Caco-2 (cell line): ENCODE measurements at regions of chr1 and their contacts with region 1.

Region 1: DNA sequence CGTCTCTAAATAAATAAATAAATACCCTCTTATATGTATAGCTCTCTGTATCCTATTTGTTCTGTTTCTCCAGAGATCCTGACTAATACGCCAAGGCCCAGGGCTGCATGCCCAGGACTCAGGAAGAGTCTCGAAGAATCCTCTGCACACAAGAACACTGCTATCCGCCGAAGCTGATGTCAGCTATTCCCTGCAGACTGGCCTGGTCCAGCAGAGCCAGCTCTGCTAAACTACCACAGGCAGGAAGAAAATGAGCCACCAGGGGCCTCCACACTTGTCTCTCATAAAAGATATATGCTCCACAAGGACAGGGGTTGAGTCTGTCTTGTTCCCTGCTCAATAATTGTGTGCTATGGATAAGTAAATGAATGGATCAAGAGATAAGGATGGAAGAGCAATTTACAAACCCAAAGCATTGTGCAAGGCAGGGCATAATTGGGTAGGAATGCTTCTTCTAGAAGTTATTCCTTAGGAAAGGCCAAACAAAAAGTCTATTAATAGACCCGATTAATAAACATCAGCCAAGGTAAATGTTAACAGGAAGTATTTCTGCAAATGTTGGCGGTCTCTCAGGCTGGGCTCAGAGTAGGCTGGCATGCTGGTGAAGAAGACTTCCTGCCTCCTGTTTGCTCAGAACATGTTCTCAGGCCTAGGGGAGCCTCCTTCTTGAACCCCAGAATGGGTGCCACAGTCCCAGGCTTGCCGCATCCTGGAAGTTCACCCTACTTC is 26.3 kb upstream of the MAN1C1 start:
- DNase-seq: peak in 1 of 2 experiments; percentile 23
- H3K4me3 ChIP-seq: no peak overlapping the region
- H3K4me3 Mint-ChIP-seq: no peak overlapping the region
- H3K27ac Mint-ChIP-seq: no peak overlapping the region
- H3K4me1 ChIP-seq: peaks cover 27% of the 10 kb centered on the region
- H3K4me1 Mint-ChIP-seq: peaks cover 18% of the 10 kb centered on the region
- H3K27me3 ChIP-seq: no peaks in the 10 kb centered on the region
- H3K27me3 Mint-ChIP-seq: no peaks in the 10 kb centered on the region
- CTCF ChIP-seq: no peak

Region 2: GRCh38 chr1:25447547-25447946 is 142.7 kb before region 1 on chr1:
- CTCF ChIA-PET with region 1: no interaction called
- POLR2A ChIA-PET with region 1: no interaction called
- intact Hi-C with region 1: no loop called
- DNase-seq: no peak
- H3K4me3 ChIP-seq: no peak overlapping the region
- H3K4me3 Mint-ChIP-seq: no peak overlapping the region
- H3K27ac Mint-ChIP-seq: no peak overlapping the region
- H3K4me1 ChIP-seq: peaks cover under 1% of the 10 kb centered on the region; the same call in 1 of the 2 replicates
- H3K4me1 Mint-ChIP-seq: no peaks in the 10 kb centered on the region
- H3K27me3 ChIP-seq: no peaks in the 10 kb centered on the region
- H3K27me3 Mint-ChIP-seq: no peaks in the 10 kb centered on the region
- CTCF ChIP-seq: no peak

Region 3: DNA sequence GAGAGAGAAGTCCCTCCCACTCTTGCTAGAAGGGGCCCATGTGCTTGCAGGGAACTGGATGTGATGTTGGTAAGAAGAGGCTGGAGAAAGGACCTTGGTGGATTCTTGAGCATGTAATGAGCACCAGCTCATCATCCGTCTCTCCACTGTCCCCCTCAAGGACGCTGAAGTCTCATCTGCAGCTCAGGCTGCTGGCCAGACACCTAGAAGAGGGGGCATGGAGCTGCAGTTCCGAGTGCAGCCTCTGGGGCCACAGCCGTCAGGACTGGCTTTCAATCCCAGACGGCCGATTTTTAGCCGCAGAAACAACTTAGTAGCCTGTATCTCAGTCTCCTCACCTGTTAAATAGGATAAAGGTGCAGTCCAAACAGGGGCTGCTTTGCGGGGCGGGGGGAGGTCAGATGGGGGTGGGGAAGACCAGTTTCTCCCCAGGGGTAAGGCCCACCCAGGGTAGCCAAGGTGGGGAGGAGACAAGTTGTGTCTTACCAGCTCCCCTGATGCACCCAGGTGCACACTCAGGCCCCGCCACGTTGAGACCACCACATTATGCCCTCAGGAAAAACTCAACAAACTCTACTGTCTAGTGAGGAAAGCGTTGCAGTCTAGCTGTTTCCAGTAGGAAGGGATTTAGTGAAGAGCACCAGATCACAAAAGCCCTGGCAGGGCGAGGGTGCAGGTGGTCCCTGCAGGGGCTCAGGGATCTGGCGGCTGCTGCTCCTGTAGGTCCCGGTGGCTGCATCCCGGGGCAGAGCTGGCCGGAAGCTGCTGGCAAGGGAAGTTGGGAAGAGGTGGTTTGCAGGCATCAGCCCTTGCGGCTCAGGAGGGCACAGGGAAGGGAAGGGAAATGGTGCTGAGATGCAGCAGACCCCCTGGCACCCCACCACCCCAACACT is 17.3 kb before region 1 on chr1:
- CTCF ChIA-PET with region 1: interaction called, 5 read pairs
- POLR2A ChIA-PET with region 1: no interaction called
- intact Hi-C with region 1: loop called (anchors 2 kb)
- DNase-seq: peak; percentile 75 to 77
- H3K4me3 ChIP-seq: no peak overlapping the region
- H3K4me3 Mint-ChIP-seq: peak overlapping the region; percentile 44
- H3K27ac Mint-ChIP-seq: peak overlapping the region; percentile 87
- H3K4me1 ChIP-seq: peaks cover 36% of the 10 kb centered on the region
- H3K4me1 Mint-ChIP-seq: peaks cover 25% of the 10 kb centered on the region
- H3K27me3 ChIP-seq: no peaks in the 10 kb centered on the region
- H3K27me3 Mint-ChIP-seq: no peaks in the 10 kb centered on the region
- CTCF ChIP-seq: peak; percentile 57 to 66